Activated CD8-positive, alpha-beta T cell treated with anti-CD3 and anti-CD28 coated beads for 36 hours (primary cell): ENCODE measurements at regions of chr14 and their contacts with region 1.

Region 1: GRCh38 chr14:70359181-70360090 is at the start of gene COX16:
- DNase-seq: peak; percentile 92
- ATAC-seq: peak; percentile 95
- H3K4me3 Mint-ChIP-seq: peak within 1 kb of the TSS; percentile 98
- H3K27ac Mint-ChIP-seq: peak within 1 kb of the TSS; percentile 86
- H3K4me1 Mint-ChIP-seq: peaks cover 38% of the 10 kb centered on the region
- H3K27me3 Mint-ChIP-seq: no peaks in the 10 kb centered on the region
- CTCF ChIP-seq: no peak
- total RNA-seq, gene COX16: 51.4 to 54.3 TPM

Region 2: GRCh38 chr14:69483765-69484443 is 875.5 kb before region 1 on chr14:
- CTCF ChIA-PET with region 1: no interaction called
- POLR2A ChIA-PET with region 1: no interaction called
- intact Hi-C with region 1: no loop called
- DNase-seq: no peak
- ATAC-seq: no peak
- H3K4me3 Mint-ChIP-seq: no peak overlapping the region
- H3K27ac Mint-ChIP-seq: no peak overlapping the region
- H3K4me1 Mint-ChIP-seq: no peaks in the 10 kb centered on the region
- H3K27me3 Mint-ChIP-seq: peaks cover 34% of the 10 kb centered on the region
- CTCF ChIP-seq: no peak

Region 3: DNA sequence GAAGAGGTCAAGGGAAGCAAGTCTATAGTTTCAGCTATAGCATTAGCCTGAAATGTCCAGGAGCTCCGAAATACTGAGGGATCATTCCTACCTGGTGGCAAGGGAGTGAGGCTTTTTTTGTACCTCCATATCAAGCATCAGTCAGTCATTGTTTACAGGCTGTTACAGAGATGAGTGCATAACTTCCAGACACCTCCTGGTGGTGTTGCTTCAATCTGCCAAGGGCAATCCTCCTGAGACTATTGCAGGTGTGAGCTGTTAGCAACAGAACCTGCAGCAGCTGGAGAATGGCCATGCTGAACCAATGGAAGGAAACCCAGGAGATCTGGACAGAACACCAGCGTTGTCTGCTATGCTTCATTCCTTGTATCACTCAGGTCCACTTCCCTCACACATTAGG is 90.7 kb before region 1 on chr14:
- CTCF ChIA-PET with region 1: no interaction called
- POLR2A ChIA-PET with region 1: no interaction called
- intact Hi-C with region 1: no loop called
- DNase-seq: no peak
- ATAC-seq: no peak
- H3K4me3 Mint-ChIP-seq: no peak overlapping the region
- H3K27ac Mint-ChIP-seq: no peak overlapping the region
- H3K4me1 Mint-ChIP-seq: no peaks in the 10 kb centered on the region
- H3K27me3 Mint-ChIP-seq: peaks cover 15% of the 10 kb centered on the region
- CTCF ChIP-seq: no peak

Region 4: GRCh38 chr14:70289138-70289537 is 70.3 kb before region 1 on chr14:
- CTCF ChIA-PET with region 1: interaction called, 5 read pairs
- POLR2A ChIA-PET with region 1: interaction called, 7 read pairs
- intact Hi-C with region 1: loop called (anchors 2 kb)
- DNase-seq: peak; percentile 81
- ATAC-seq: peak; percentile 94
- H3K4me3 Mint-ChIP-seq: peak overlapping the region; percentile 27
- H3K27ac Mint-ChIP-seq: no peak overlapping the region
- H3K4me1 Mint-ChIP-seq: peaks cover 5% of the 10 kb centered on the region
- H3K27me3 Mint-ChIP-seq: peaks cover 5% of the 10 kb centered on the region
- CTCF ChIP-seq: no peak